Lower lobe of right lung (tissue), 2 donors: ENCODE measurements at regions of chr1 and their contacts with region 1.

Region 1: DNA sequence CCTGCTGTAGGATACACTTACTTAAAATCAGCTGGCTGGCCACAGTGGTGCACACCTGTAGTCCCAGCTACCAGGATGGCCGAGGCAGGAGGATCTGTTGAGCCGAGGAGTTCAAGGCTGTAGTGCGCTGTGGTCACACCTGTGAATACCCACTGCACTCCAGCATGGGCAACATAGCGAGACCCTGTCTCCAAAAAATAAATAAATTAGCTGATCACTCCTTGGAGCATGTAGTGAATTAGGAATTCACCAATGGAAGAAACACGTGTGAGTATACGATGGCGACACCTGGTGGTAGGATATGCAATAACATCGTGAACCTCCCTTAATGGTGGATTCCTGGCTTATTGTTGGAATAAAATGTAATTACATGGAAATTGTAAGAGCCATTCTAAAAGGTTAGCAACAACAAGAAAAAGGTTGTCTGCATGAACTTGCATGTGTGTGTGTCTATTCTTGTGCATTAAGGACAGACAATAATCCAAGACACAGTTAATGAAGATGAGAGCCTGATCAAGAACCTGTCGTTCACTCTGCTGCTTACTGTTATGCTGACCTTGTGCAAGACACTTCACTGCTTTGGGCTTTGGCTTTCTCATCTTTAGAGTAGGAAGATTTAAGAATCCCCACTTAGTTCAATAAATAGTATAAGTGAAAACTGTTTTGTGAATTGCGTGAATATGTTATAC is 38.6 kb upstream of the COX20 start:
- DNase-seq: no peak
- ATAC-seq: peak; percentile 81
- H3K4me3 ChIP-seq: no peak overlapping the region
- H3K27ac ChIP-seq: no peak overlapping the region
- H3K4me1 ChIP-seq: peaks cover 6% of the 10 kb centered on the region
- H3K27me3 ChIP-seq: no peaks in the 10 kb centered on the region
- CTCF ChIP-seq: peak; percentile 90

Region 2: GRCh38 chr1:244605835-244606370 is 191.0 kb before region 1 on chr1:
- intact Hi-C with region 1: loop called (anchors 2 kb)
- DNase-seq: no peak
- ATAC-seq: no peak
- H3K4me3 ChIP-seq: no peak overlapping the region
- H3K27ac ChIP-seq: no peak overlapping the region
- H3K4me1 ChIP-seq: no peaks in the 10 kb centered on the region
- H3K27me3 ChIP-seq: no peaks in the 10 kb centered on the region
- CTCF ChIP-seq: no peak

Region 3: GRCh38 chr1:244665771-244666217 is 131.1 kb before region 1 on chr1:
- intact Hi-C with region 1: no loop called
- DNase-seq: no peak
- ATAC-seq: peak; percentile 20 to 65
- H3K4me3 ChIP-seq: no peak overlapping the region
- H3K27ac ChIP-seq: peak overlapping the region; percentile 13
- H3K4me1 ChIP-seq: peaks cover 32% of the 10 kb centered on the region
- H3K27me3 ChIP-seq: no peaks in the 10 kb centered on the region
- CTCF ChIP-seq: no peak